SK-N-SH (cell line): ENCODE measurements at regions of chr6 and their contacts with region 1.

Region 1: DNA sequence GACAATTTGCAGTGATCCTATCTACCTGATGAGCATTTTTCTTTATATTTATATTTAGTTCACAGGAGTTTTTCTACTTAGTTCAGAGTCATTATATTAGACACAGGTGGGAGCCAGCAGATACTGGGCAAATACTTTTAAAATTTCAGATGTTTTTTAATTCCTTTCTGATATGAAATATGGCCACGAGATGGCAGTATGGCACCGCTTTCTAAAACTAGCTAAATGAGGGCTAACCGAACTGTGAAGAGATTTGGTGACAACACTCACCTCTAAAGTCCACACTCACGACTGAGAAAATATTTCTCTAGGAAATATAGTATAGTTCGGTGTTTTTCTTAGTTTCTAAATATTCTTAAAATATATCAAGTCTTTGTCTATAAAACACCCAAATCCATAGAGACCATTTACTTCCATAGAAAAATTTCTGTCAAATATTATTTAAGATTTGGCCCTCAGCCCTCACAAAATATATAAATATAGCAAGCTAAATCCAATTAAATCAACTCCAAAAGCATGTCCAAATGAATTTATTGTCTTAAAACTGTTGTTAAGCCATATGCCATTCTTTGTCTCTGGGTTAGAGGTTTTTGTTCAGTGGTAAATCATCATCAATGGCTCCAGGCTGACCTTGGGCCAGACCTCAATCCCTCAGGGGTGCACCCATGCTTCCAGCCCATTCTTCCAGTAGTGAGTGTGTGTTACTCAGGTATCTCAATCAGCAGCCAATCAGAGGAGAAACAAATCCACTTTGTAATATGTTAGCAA is 63.6 kb downstream of the HUS1B start:
- DNase-seq: peak; percentile 52
- H3K4me3 ChIP-seq: no peak overlapping the region
- H3K27ac ChIP-seq: no peak overlapping the region
- H3K4me1 ChIP-seq: no peaks in the 10 kb centered on the region
- H3K27me3 ChIP-seq: no peaks in the 10 kb centered on the region
- CTCF ChIP-seq: peak; percentile 81
- EP300 ChIP-seq: no peak
- RAD21 ChIP-seq: peak; percentile 79

Region 2: GRCh38 chr6:227074-227782 is 366.1 kb before region 1 on chr6:
- CTCF ChIA-PET with region 1: no interaction called
- POLR2A ChIA-PET with region 1: no interaction called
- DNase-seq: no peak
- H3K4me3 ChIP-seq: no peak overlapping the region
- H3K27ac ChIP-seq: no peak overlapping the region
- H3K4me1 ChIP-seq: no peaks in the 10 kb centered on the region
- H3K27me3 ChIP-seq: peaks cover 71% of the 10 kb centered on the region
- CTCF ChIP-seq: 0 out of 2 replicates have a peak, but pooled peaks have one; percentile 14
- EP300 ChIP-seq: no peak
- RAD21 ChIP-seq: 0 out of 2 replicates have a peak, but pooled peaks have one; percentile 21

Region 3: DNA sequence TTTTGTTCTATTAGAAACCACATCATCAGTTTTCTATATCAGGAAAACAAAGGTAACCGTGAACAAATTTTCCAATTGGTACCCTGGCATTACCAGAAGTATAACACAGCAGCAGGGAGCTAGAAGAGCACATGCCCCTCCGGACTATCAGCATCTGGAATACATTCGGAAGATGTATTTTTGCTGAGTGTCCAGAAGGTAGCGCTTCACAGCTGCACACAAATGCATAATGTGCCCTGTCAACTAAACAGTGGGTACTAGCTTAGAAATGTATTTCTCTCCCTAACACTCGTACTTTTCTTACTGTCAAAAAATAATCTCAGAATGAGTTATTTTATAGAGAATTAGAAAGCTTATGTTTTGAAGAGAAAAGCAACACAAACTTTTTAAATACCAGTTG is 14.0 kb before region 1 on chr6:
- CTCF ChIA-PET with region 1: interaction called, 37 read pairs
- POLR2A ChIA-PET with region 1: no interaction called
- DNase-seq: peak; percentile 69
- H3K4me3 ChIP-seq: no peak overlapping the region
- H3K27ac ChIP-seq: no peak overlapping the region
- H3K4me1 ChIP-seq: peaks cover 0 to 3% of the 10 kb centered on the region in 2 experiments; a peak in 2 of 4 replicates
- H3K27me3 ChIP-seq: no peaks in the 10 kb centered on the region
- CTCF ChIP-seq: peak; percentile 36
- EP300 ChIP-seq: no peak
- RAD21 ChIP-seq: peak; percentile 49

Region 4: DNA sequence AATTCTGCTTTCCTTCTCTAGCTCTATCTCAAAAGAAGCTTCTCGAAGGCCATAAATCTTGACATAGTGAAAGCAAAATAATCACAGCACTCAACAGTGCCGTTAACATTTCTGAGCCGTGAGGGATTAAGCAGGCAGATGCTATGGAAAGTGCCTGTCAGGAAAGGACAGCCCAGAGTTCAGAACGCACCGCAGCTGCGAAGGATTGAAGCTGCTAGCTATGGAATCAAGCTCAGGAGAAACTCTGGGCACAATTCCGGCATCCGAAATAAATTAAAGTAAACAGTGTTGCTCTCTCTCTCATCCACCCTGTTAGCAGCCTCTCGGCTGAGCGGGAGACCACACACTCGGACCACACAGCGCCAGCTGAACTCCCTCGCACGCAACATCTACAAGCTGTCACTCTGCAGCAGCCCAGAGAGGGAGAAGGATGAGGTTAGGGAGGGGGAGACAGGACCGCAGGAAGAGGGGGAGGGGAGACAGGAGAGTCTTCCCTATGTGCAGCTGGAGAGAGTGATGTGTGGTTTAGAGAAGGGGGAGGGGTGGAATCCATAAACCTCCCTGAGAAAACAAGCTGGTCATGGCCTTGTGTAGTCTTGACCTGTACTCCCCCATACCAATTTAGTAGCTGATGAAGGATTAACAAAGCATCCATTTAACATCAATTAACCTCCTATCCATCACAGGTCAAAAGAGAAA is 90.6 kb after region 1 on chr6:
- CTCF ChIA-PET with region 1: interaction called, 13 read pairs
- POLR2A ChIA-PET with region 1: no interaction called
- DNase-seq: peak; percentile 63
- H3K4me3 ChIP-seq: no peak overlapping the region
- H3K27ac ChIP-seq: no peak overlapping the region; a peak in 1 of 4 replicates
- H3K4me1 ChIP-seq: peaks cover 3 to 9% of the 10 kb centered on the region in 2 experiments; a peak in 3 of 4 replicates
- H3K27me3 ChIP-seq: no peaks in the 10 kb centered on the region
- CTCF ChIP-seq: no peak
- EP300 ChIP-seq: no peak
- RAD21 ChIP-seq: no peak

Region 5: DNA sequence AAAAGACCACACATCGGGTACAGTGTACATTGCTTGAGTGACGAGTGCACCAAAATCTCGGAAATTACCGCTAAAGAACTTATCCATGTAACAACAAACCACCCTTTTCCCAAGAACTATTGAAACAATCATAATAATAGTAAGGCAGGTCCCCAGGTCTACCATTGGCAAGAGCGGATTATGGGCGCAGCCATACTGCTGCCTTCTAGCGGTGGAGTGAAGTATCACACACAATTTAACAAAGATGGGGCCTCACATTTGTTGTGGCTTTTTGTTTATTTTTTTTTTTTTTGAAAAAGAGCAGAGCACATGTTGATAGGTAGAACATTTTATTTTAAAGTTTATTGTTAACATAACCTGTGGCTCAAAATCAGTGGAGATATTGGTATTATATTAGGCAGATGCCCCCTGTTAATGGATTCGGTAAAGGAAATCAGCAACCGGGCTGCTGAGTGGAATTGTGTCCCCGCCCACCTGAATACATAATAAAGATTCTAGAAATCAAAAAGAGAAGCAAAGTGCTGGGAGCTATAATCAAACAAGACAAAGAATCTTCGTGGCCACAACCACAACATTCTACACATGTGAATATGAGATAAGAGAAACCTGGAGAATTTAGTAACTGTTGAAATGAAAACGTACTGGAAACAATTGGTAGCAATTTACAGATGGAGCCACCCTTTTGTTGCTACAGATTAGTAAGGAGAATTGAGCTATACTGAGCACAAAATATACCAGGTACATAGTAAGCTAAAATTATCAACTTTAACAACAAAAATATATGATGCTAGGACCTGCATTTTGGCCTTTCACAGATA is 193.8 kb after region 1 on chr6:
- CTCF ChIA-PET with region 1: interaction called, 11 read pairs
- POLR2A ChIA-PET with region 1: no interaction called
- DNase-seq: peak; percentile 57
- H3K4me3 ChIP-seq: peak overlapping the region in 1 of 2 experiments; percentile 33; a peak in 1 of 4 replicates
- H3K27ac ChIP-seq: no peak overlapping the region
- H3K4me1 ChIP-seq: no peaks in the 10 kb centered on the region
- H3K27me3 ChIP-seq: peaks cover 34% of the 10 kb centered on the region
- CTCF ChIP-seq: peak; percentile 78
- EP300 ChIP-seq: no peak
- RAD21 ChIP-seq: peak; percentile 58

Region 6: DNA sequence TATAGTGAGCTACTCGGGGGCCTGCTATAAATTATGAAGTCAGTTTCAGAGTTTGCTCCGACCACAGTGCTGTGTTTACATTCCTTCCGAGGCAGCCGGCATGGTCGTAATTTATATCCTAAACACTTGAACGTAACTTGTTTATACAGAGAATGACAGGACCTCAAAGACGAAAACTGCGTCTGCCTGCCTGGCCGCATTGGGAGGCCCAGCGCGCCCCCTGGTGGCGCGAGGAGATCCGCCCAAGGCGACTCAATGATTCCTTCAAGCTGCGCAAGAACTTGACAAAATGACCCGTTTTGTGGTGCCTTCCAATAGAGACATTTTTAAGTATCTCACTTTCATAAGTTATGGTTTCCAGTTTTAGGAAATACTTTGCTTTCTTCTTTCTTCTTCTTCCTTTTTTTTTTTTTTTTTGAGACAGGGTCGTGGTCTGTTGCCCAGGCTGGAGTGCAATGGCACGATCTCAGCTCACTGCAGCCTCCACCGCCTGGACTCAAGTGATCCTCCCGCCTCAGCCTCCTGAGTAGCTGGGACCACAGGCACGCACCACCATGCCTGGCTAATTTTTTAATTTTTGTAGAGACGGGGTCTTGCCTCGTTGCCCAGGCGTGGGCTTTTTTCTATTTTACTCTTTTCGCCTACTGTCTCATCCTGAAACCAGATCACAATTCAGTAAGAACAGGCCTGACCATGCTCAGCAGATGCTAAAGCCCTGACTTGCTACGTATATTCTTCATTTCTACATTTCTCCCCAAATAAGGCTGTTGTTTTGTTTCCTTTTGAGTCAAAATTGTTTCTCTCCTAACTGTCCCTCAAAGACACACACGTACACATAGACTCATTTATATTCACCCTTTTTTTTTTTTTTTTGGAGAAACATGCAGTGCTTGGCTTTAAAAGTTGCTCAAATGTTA is 803.9 kb after region 1 on chr6:
- CTCF ChIA-PET with region 1: interaction called, 23 read pairs
- POLR2A ChIA-PET with region 1: no interaction called
- DNase-seq: peak; percentile 81
- H3K4me3 ChIP-seq: peak overlapping the region in 1 of 2 experiments; percentile 51; a peak in 1 of 4 replicates
- H3K27ac ChIP-seq: no peak overlapping the region
- H3K4me1 ChIP-seq: no peaks in the 10 kb centered on the region
- H3K27me3 ChIP-seq: peaks cover 96% of the 10 kb centered on the region
- CTCF ChIP-seq: peak; percentile 98
- EP300 ChIP-seq: no peak
- RAD21 ChIP-seq: peak; percentile 70